Head of caudate nucleus (tissue), 42 donors: ENCODE measurements at regions of chr17 and their contacts with region 1.

Region 1: DNA sequence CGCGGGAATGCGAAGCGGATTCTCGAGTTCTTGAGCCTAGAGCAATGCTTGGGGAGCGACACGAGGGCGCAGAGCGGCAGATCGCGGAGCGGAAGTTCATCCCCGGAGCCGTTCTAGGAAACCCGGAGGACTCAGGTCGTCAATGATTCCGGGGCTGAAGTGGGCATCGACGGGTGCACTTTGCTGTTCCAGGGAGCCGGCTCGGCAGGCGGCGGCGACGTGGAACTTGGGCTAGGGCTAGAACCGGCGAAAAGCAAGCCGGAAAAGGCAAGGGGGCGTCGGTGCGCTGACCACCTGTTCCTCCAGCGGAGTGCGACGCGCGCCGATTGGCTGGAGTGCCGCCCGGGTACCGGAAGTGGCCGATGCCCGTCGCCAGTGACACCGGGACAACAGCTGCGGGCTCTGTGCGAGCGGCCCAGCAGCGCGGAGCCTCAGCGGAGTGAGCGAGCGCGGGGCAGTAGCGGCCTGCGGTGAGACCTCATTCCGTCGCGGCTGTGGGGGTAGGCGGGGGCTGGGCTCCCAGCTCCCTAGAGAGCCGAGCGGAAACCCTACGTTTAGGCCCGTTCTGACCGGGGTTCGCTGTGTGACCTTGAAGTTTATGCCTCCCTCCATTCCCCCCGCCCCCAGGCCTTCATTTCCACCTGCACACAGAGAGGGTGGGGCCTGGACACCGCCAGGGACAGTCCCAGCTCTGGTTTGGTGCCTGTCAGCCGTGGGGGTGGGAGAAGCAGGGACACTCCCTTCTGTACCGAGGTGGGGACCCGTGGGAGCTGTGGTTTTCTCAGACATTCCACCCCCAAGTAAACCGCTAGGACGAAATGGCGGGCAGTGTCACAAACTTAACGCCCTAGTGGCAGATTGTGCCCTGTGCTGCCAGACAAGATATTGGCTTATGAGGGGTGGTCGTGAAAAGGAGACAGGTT is at the start of gene ZFP3:
- DNase-seq: peak; percentile 72 to 94 (median 88)

Region 2: DNA sequence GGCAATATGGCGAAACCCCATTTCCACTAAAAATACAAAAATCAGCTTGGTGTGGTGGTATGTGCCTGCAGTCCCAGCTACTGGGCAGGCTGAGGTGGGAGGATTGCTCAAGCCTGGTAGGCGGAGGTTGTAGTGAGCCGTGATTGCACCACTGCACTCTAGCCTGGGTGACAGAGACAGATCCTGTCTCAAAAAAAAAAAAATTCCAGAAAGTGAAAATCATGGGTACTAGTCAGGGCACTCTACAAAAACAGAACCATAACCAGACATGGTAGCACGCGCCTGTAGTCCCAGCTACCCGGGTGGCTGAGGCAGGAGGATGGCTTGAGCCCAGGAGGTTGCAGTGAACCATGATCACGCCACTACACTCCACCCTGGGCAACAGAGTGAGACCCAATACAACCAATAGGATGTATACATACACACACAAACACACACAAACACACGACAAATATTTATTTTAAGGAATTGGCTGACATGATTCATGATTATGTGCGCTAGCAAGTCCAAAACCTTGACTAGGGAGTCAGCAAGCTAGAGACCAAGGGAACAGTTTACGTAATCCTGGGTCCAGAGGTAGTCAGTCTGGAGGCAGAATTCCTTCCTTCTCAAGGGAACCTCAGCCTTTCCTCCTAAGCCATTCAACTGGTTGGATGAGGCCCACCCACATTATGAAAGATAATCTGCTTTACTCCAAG is 157.9 kb before region 1 on chr17:
- intact Hi-C with region 1: no loop called
- DNase-seq: no peak

Region 3: DNA sequence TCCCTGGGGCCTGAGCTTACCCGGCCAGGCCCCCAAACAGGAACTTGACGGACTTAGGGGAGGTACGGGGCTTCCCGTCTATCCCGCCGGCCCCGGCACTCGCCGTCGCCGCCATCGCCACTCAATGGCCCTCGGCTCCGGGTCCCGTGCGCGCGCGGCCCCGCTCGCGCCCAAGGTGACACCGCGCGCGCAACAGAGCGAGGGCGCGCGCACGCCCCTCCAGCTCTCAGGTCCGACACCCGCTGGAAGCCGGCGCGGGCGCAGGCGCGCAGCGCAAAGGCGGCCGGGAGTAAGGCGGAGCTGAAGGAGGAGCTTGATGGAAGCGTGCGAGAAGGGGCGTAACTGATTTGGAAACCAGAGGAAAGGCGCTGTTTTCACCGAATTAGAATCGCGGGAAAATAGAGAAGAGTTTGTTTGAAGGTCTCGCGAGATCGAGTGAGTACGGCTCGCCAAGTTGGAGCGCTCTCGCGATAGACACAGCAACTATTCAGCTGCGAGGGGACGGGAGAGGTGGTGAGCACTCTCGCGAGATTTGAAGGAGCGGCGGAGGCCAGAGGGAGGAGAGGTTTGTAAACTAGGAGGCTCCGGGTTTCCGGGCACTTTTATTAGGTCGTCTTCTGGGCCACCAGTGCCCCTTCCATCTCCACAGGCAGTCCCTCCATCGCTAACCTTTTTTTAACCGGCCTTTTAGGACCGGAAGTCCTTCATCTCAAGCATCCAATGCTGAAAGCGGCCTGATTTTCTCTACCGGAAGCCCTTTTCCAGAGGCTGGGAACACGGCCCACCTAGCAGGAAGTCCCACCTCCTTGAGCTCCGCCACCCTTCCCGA is 138.4 kb before region 1 on chr17 and contains the starts of genes RNF167 and SLC25A11:
- intact Hi-C with region 1: loop called (anchors 5 kb)
- DNase-seq: peak; percentile 89 to 98 (median 96)

Region 4: DNA sequence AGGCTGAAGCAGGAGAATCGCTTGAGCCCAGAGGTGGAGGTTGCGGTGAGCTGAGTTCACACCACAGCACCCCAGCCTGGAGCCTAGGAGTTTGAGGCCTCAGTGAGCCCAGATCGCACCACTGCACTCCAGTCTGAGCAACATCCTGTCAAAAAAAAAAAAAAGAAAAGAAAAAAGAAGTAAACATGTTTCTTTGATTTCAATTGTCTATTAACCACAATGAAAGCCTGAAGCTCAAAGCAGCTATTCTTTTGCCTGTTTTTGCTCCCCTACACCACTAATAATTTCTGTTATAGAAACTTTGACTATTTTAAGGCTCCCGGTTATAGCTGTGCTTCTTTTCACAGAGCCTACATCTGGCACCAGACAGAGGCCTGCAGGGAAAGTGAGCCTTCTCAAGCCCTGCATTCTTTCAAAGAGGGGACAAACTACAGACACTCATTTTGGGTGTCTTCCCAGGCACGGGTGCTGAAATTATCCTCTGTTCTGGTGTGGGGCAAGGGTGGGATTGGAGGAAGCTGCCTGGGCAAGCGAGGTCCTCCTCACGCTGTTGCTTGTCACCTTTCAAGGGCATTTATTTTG is 29.0 kb before region 1 on chr17:
- intact Hi-C with region 1: no loop called
- DNase-seq: no peak

Region 5: DNA sequence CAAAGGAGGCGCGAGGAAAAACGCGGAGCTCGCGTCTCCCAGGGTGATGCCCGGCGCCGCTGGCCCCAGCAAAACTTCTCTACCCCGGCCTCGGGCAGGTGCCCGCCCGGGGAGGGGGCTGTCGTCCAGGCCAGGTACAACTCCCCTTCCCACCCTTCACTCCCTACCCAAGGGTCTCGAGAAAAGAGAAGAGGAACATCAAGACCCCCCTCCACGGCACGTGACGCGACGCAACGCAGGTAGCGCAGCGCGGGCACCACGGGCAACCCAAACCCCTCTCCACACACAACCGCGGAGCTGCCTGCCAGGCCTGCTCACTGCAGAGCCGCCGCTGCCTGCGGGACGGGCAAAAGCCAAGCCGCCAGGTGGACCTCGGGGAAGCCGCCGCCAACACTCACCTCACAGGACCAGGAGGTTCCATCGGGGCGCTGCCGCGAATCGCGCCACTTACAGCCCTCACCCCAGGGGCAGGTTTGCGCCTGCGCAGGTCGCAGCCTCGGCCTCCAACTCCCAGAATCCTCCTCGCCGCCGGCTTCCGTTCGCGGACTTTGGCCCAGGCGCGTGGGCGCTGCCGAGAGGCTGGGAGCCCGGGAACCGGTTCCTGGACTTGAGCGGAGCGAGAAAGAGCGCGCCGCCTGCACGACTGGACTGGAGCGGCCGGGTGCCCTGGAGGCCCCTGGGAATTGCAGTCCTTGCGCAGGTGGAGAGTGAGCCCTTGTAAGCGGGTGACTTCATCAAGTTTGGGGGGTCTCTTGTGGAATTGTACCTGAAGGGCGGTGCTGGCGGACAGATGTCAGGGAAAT is 33.2 kb after region 1 on chr17 and contains the start of gene ZNF232:
- intact Hi-C with region 1: loop called (anchors 5 kb)
- DNase-seq: peak; percentile 75 to 97 (median 91)

Region 6: DNA sequence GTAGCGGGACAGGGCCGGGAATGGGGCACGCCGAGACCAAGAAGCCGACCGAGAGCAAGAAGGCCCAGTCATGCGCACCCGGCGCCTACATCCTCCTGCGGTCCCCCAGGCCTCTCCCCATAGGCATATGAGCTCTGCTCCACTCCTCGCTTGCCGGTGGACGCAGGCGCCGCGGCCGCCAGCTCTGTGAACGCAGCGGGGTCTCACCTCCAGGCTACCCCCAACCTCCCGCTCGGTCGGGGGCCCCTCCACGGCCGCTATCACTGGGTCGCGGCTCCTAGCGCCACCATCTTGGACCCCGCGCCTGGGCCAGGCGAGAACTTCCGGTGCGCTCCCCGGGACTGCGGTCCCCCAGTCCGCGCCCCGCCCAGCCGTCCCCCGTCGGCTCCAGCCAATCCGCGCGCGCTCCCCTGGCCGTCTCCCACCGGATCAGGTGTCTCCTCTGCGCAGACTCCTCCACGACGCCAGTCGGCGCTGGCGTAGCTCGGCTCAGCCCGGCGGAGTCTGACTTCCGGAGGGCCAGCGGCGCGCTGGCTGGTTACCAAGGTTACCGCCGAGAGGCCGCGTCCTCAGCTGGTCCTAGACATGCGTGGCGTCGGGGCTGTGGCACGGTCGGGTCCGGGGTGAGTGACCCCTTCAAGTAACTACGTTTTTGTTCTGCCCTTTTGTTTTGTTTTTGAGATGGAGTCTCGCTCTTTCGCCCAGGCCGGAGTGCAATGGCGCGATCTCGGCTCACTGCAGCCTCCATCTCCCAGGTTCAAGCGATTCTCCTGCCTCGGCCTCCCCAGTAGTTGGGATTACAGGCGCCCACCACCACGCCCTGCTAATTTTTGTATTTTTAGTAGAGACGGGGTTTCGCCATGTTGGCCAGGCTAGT is 113.4 kb after region 1 on chr17 and contains the start of gene ZNF594:
- intact Hi-C with region 1: loop called (anchors 10 kb)
- DNase-seq: peak; percentile 89 to 99 (median 96)